Panc1 (cell line): ENCODE measurements at regions of chr15 and their contacts with region 1.

Region 1: GRCh38 chr15:88932271-88932874 is 19.2 kb upstream of the MFGE8 start:
- DNase-seq: no peak
- ATAC-seq: 0 out of 2 replicates have a peak, but pooled peaks have one; percentile 27
- H3K4me3 ChIP-seq: no peak overlapping the region
- H3K27ac ChIP-seq: peak overlapping the region; percentile 62; the same call in 1 of the 2 replicates
- H3K4me1 ChIP-seq: 0 out of 2 replicates have a peak, but pooled peaks cover 3% of the 10 kb centered on the region
- H3K27me3 ChIP-seq: no peaks in the 10 kb centered on the region
- CTCF ChIP-seq: no peak

Region 2: DNA sequence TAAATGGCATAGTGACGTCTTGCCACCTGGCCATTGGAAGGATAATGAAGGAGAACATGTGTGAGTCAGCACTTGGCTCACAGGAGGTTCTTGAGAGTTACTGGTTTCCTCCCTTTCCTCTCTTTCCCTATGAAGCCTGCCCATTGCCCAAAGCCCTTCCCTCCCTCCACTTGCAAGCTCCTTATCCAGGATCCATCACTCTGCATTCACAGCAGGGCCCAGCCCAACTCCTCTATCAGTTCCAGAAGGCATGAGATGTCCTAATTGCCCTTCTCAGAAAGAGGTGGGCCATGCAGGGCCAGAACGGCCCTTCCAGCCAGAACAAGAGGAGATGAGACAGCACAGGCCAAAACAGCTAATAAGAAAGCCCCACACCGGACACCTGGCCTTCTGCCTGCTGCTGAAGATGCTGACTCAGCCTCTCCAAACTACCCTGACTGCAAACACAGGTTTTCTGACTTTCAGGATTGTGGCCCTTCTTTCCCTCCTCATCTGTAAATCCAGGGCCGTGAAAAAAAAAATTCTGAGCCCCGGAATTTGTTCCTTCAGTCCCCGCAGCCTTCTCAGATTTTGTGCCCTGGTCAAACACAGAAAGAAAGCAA is 66.8 kb before region 1 on chr15:
- CTCF ChIA-PET with region 1: no interaction called
- POLR2A ChIA-PET with region 1: interaction called, 11 read pairs
- in situ Hi-C with region 1: no loop called
- intact Hi-C with region 1: no loop called
- DNase-seq: no peak
- ATAC-seq: no peak
- H3K4me3 ChIP-seq: no peak overlapping the region
- H3K27ac ChIP-seq: no peak overlapping the region
- H3K4me1 ChIP-seq: no peaks in the 10 kb centered on the region
- H3K27me3 ChIP-seq: no peaks in the 10 kb centered on the region
- CTCF ChIP-seq: no peak